Endothelial cell of umbilical vein (primary cell): ENCODE measurements at regions of chr9 and their contacts with region 1.

Region 1: DNA sequence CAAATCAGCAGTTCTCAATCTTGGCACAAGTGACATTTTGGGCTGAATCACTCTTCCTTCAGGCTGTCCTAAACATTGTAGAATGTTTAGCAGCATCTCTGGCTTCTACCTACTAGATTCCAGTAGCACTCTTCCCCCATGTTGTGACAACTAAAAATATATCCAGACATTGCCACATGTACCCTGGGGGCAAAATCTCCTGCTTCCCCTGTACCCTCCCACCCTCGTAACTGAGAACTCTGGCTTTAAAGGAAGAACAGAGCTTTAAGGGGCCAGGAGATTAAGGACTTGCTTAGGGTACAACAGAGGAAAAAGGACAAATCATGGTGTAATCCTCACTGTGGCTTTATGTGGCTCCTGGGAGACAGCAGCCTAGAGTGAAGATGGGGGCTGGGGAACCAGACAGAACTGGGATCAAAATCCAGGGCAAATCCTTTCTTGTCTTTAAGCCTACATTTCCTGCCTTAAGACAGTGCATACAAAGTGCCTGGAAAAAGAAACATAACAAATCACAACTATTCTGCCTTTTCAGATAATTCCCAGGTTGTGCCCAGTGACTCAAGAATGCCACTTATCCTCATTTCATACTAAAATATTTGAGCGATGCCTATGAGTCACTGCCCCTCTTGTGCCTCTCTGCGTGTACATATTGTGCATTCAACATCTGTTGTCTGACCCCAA is 109.3 kb downstream of the DAPK1 start:
- DNase-seq: peak; percentile 78
- H3K4me3 ChIP-seq: no peak overlapping the region
- H3K27ac ChIP-seq: peak overlapping the region; percentile 86
- H3K4me1 ChIP-seq: peaks cover 18% of the 10 kb centered on the region
- H3K27me3 ChIP-seq: no peaks in the 10 kb centered on the region
- CTCF ChIP-seq: no peak
- POLR2A ChIP-seq: no peak

Region 2: GRCh38 chr9:87557996-87558395 is 49.0 kb before region 1 on chr9:
- CTCF ChIA-PET with region 1: no interaction called
- POLR2A ChIA-PET with region 1: no interaction called
- dilution Hi-C with region 1: no loop called
- intact Hi-C with region 1: no loop called
- DNase-seq: no peak
- H3K4me3 ChIP-seq: no peak overlapping the region
- H3K27ac ChIP-seq: no peak overlapping the region
- H3K4me1 ChIP-seq: no peaks in the 10 kb centered on the region
- H3K27me3 ChIP-seq: no peaks in the 10 kb centered on the region
- CTCF ChIP-seq: no peak
- POLR2A ChIP-seq: no peak

Region 3: DNA sequence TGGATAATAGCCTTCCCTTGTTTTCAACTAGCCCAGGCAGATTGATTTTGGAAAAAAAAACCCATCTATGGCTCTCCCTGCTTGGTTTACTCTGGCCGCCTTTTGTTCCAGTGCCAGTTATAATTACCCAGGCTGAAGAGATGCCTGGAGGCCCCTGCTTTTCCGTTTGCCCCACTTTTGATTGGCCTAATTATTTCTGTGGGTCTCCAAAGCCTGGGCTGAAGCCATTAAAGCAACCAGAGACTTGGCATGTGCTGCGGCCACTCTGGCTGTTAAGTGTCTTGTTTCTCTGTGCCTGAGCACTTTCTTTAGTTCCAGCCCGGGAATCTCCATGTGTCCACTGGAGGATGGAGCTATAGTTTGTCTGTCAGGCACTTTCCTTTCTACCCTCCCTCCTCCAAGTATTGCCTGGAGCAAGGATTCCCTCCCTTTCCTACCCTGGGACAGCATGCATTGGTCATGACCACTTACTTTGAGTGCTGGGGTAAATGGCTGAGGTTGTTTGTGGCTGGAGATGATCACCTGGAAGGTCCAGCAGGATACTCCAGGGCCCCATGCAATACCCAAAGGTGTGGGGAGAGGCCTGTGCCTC is 13.8 kb after region 1 on chr9:
- CTCF ChIA-PET with region 1: no interaction called
- POLR2A ChIA-PET with region 1: no interaction called
- dilution Hi-C with region 1: no loop called
- intact Hi-C with region 1: no loop called
- DNase-seq: no peak
- H3K4me3 ChIP-seq: no peak overlapping the region
- H3K27ac ChIP-seq: no peak overlapping the region
- H3K4me1 ChIP-seq: no peaks in the 10 kb centered on the region
- H3K27me3 ChIP-seq: no peaks in the 10 kb centered on the region
- CTCF ChIP-seq: no peak
- POLR2A ChIP-seq: no peak

Region 4: GRCh38 chr9:87640385-87640795 is 33.4 kb after region 1 on chr9:
- CTCF ChIA-PET with region 1: no interaction called
- POLR2A ChIA-PET with region 1: no interaction called
- dilution Hi-C with region 1: no loop called
- intact Hi-C with region 1: loop called (anchors 2 kb)
- DNase-seq: peak; percentile 97
- H3K4me3 ChIP-seq: no peak overlapping the region
- H3K27ac ChIP-seq: no peak overlapping the region
- H3K4me1 ChIP-seq: peaks cover 10% of the 10 kb centered on the region
- H3K27me3 ChIP-seq: no peaks in the 10 kb centered on the region
- CTCF ChIP-seq: no peak
- POLR2A ChIP-seq: no peak

Region 5: GRCh38 chr9:87749335-87750035 is 142.5 kb after region 1 on chr9:
- CTCF ChIA-PET with region 1: no interaction called
- POLR2A ChIA-PET with region 1: no interaction called
- dilution Hi-C with region 1: no loop called
- intact Hi-C with region 1: no loop called
- DNase-seq: peak; percentile 30
- H3K4me3 ChIP-seq: no peak overlapping the region
- H3K27ac ChIP-seq: no peak overlapping the region
- H3K4me1 ChIP-seq: peaks cover 13% of the 10 kb centered on the region
- H3K27me3 ChIP-seq: no peaks in the 10 kb centered on the region
- CTCF ChIP-seq: no peak
- POLR2A ChIP-seq: no peak